Ascending aorta (tissue), 2 donors: ENCODE measurements at regions of chr14 and their contacts with region 1.

Region 1: DNA sequence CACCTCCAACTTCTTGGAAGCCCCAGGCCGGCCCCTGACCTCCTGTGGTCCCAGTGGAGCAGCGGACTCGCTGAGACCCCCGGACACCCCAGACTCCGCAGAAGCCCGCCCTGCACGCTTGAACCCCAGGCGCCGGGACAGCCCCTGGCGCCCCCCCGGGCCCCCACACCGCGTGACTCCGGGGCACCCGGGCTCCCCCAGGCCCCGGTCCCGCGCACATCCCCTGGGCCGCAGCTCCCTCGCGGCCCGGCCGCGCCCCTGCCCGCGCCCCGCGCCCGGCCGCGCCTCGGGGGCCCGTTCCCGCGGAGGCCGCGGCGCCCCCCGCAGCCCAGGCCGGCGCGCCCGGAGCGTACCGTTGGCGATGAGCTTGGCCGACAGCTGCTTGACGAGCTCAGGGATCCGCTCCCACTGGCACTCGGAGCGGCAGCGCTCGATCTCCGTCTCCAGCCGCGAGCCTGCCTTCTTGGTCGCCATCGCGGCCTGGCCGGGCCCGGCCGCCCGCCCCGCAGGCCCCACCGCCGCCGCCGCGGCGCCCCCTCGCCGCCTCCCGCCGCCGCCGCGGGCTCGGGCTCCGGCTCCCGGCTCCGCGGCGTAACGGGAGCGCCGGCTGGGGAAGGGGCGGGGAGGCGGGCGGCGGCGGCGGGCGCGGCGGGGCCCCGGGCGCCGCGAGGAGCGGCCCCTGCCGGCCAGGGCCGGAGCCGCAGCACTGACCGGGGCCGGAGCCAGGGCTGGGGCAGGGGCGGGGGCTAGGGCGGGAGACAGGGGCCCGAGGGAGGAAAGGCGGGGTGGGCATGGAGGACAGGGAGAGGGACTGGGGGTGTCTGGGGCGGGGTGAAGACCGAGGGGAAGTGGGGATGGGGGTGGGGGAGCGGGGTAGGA is at the start of gene TTC7B:
- DNase-seq: no peak
- H3K4me3 ChIP-seq: peak within 1 kb of the TSS; percentile 93
- H3K27ac ChIP-seq: no peak within 1 kb of the TSS
- H3K4me1 ChIP-seq: peaks cover 0 to 6% of the 10 kb centered on the region in 2 donors
- H3K27me3 ChIP-seq: no peaks in the 10 kb centered on the region
- CTCF ChIP-seq: peak; percentile 24 to 45 (median 26)
- total RNA-seq, gene TTC7B: 18.5 TPM

Region 2: DNA sequence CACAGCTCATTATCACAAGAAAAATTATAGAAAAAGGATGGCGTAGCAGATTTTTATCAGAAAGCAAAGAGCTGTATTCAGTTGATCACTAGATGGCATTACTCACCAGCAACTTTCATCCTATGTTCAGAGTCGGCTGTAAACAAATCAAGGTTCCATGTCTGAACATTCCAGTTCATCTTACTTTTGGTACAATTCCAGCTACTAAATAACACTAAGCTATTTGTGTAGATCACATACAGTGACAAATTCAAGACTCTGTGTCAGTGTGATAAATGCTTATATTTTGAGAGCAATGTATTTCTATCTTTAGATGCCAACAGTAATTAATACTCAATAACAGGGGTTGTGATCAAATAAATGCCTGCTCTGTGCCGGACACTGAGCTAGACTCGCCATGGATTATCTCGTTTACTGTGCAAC is 514.4 kb before region 1 on chr14:
- intact Hi-C with region 1: loop called (anchors 2 kb)
- DNase-seq: no peak
- H3K4me3 ChIP-seq: no peak overlapping the region
- H3K27ac ChIP-seq: peak overlapping the region; percentile 37 to 40
- H3K4me1 ChIP-seq: peaks cover 0 to 14% of the 10 kb centered on the region in 2 donors
- H3K27me3 ChIP-seq: no peaks in the 10 kb centered on the region
- CTCF ChIP-seq: peak in 2 of 3 experiments; percentile 52 to 63

Region 3: DNA sequence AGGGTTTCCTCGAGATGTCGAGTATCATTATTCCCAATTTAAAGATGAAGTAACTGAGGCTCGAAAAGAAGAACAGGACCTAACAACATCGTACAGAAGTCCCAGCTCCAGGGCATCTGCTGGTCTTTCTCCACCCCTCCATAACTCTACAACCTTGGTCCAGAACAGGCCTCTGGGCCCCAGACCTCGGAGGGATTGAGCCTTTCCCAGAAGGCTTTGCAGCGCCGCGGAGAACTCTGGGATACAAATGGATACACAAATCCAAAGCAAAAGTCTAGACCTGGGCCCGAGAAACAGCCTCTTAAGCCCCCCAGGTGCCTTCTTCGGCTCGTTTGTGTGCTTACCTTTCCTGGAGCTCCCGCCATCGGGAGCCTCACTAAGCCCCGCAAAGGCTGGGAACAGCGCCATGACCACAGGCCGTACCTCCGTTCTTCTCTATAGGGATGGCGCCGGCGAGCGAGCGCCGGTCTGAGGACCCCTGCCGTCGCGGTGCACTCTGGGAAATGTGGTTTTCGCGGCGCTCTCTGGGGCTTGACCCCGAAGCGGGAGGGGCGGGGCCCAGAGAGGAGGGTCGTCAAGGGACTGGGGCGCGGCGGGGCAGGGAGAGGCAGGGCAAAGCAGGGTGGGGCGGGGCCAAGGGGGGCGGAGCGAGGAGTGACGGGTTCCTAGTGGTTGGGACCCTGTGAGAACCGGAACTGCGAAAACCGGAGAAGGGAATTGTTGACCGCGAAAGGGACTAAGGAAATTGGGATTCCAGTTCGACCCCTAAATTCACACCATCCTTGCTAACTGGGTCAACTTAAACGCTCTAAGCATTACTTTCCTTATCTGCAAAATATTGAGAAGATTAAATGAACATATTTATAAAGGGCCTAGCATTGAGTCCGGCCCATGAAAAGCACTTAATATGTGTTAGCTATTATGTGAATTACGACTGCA is 484.3 kb before region 1 on chr14 and contains the start of gene NRDE2:
- intact Hi-C with region 1: loop called (anchors 5 kb)
- DNase-seq: peak; percentile 91 to 99
- H3K4me3 ChIP-seq: peak within 1 kb of the TSS; percentile 70 to 81
- H3K27ac ChIP-seq: peak within 1 kb of the TSS; percentile 82 to 83
- H3K4me1 ChIP-seq: peaks cover 0 to 3% of the 10 kb centered on the region in 2 donors
- H3K27me3 ChIP-seq: no peaks in the 10 kb centered on the region
- CTCF ChIP-seq: no peak
- total RNA-seq, gene NRDE2: 9.2 TPM

Region 4: DNA sequence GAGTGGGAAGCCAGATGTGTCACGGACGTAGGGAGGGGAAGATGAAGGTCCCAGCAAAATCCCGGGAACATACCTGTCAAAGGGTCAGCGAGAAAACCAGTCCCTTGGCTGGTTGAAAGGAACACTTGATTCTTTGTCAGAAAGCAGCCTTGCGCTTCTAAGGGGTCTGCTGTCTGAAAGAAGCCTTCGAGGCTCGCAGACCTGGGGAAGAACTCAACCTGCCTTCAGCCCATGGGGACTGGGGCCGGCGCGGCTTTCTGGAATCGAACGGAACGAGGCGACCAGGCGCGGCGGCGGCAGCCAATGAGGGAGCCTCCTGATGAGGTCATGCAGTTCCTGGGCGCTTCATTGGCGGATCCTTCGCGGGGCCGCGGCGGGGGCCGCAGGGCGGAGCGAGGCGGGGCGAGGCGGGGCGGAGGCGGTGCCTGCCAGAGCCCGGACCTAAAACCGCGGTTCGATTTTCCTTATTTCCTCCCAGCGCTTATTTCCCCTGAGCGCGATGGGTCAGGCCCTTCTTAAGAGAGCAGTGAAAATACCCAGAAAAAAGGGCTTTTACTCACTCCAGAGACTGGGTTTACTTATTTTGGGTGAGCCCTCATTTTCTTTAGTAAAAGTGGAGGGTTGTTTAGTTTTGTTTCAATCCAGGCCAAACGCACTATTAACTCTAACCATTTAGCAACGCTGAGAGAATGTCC is 12.0 kb after region 1 on chr14:
- intact Hi-C with region 1: loop called (anchors 1 kb)
- DNase-seq: peak; percentile 76 to 96
- H3K4me3 ChIP-seq: peak overlapping the region; percentile 35 to 66
- H3K27ac ChIP-seq: peak overlapping the region; percentile 58 to 82
- H3K4me1 ChIP-seq: peaks cover 4 to 5% of the 10 kb centered on the region in 2 donors
- H3K27me3 ChIP-seq: no peaks in the 10 kb centered on the region
- CTCF ChIP-seq: no peak

Region 5: DNA sequence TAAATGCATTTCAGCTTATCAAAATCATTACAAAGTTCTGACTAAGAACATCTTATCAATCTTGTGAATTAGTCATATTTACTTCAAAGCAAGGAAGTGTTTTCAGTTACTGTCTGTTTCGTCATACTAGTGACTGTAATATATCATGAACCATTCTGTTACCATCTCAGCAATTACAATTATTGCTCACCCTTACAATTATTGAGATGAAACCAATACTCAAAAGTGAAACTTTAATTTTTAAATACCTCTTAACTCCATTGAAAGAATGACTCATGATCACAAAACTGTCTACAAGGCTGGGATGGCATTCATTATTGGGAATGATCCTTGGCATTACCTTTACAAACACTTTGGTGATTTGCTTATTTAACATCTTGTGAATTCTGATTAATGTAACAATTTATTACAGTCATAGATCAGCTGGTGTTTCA is 154.1 kb after region 1 on chr14:
- intact Hi-C with region 1: no loop called
- DNase-seq: no peak
- H3K4me3 ChIP-seq: no peak overlapping the region
- H3K27ac ChIP-seq: no peak overlapping the region
- H3K4me1 ChIP-seq: no peaks in the 10 kb centered on the region
- H3K27me3 ChIP-seq: no peaks in the 10 kb centered on the region
- CTCF ChIP-seq: no peak